Tibial artery (tissue), 4 donors: ENCODE measurements at regions of chr4 and their contacts with region 1.

Region 1: GRCh38 chr4:47505666-47506065 is 20.6 kb downstream of the ATP10D start:
- DNase-seq: no peak
- H3K4me3 ChIP-seq: no peak overlapping the region
- H3K27ac ChIP-seq: no peak overlapping the region
- H3K4me1 ChIP-seq: peaks cover 0 to 29% (median 10%) of the 10 kb centered on the region in 4 donors
- H3K27me3 ChIP-seq: no peaks in the 10 kb centered on the region
- CTCF ChIP-seq: no peak

Region 2: GRCh38 chr4:45855887-45856286 is 1649.8 kb before region 1 on chr4:
- intact Hi-C with region 1: loop called (anchors 5 kb)
- DNase-seq: no peak
- H3K4me3 ChIP-seq: no peak overlapping the region
- H3K27ac ChIP-seq: no peak overlapping the region
- H3K4me1 ChIP-seq: no peaks in the 10 kb centered on the region
- H3K27me3 ChIP-seq: no peaks in the 10 kb centered on the region
- CTCF ChIP-seq: no peak